Adrenal gland (tissue), 19 donors: ENCODE measurements at regions of chr11 and their contacts with region 1.

Region 1: GRCh38 chr11:44911029-44911814 is 39.5 kb downstream of the TP53I11 start:
- DNase-seq: peak; percentile 84 to 96 (median 92)
- H3K4me3 ChIP-seq: no peak overlapping the region
- H3K27ac ChIP-seq: peak overlapping the region in 1 of 5 donors; percentile 5
- H3K4me1 ChIP-seq: peaks cover 0 to 21% of the 10 kb centered on the region in 2 donors
- H3K27me3 ChIP-seq: no peaks in the 10 kb centered on the region
- CTCF ChIP-seq: peak; percentile 78 to 94 (median 86)
- POLR2A ChIP-seq: no peak

Region 2: GRCh38 chr11:44556735-44557409 is 354.4 kb before region 1 on chr11:
- intact Hi-C with region 1: loop called (anchors 10 kb)
- DNase-seq: peak; percentile 63 to 87 (median 76)
- H3K4me3 ChIP-seq: no peak overlapping the region
- H3K27ac ChIP-seq: peak overlapping the region in 3 of 5 donors; percentile 9 to 53 (median 33)
- H3K4me1 ChIP-seq: peaks cover 0 to 12% of the 10 kb centered on the region in 2 donors
- H3K27me3 ChIP-seq: no peaks in the 10 kb centered on the region
- CTCF ChIP-seq: peak; percentile 51 to 97 (median 87)
- POLR2A ChIP-seq: no peak

Region 3: GRCh38 chr11:44565211-44565952 is 345.8 kb before region 1 on chr11 and contains the start of gene CD82:
- intact Hi-C with region 1: loop called in 1 of 2 experiments (anchors 10 kb)
- DNase-seq: peak; percentile 100
- H3K4me3 ChIP-seq: peak within 1 kb of the TSS in 3 of 4 donors; percentile 50 to 59 (median 54)
- H3K27ac ChIP-seq: peak within 1 kb of the TSS; percentile 94 to 99 (median 98)
- H3K4me1 ChIP-seq: peaks cover 26 to 39% of the 10 kb centered on the region in 2 donors
- H3K27me3 ChIP-seq: no peaks in the 10 kb centered on the region
- CTCF ChIP-seq: peak in 4 of 6 experiments; percentile 15 to 44 (median 22)
- POLR2A ChIP-seq: peak; percentile 63 to 89
- total RNA-seq, gene CD82: 2.3 to 38.2 (median 20.0) TPM